Left cardiac atrium (tissue), 4 donors: ENCODE measurements at regions of chr12 and their contacts with region 1.

Region 1: GRCh38 chr12:26614020-26614616 is 218.9 kb downstream of the ITPR2 start:
- DNase-seq: peak; percentile 18
- ATAC-seq: peak; percentile 47 to 57

Region 2: DNA sequence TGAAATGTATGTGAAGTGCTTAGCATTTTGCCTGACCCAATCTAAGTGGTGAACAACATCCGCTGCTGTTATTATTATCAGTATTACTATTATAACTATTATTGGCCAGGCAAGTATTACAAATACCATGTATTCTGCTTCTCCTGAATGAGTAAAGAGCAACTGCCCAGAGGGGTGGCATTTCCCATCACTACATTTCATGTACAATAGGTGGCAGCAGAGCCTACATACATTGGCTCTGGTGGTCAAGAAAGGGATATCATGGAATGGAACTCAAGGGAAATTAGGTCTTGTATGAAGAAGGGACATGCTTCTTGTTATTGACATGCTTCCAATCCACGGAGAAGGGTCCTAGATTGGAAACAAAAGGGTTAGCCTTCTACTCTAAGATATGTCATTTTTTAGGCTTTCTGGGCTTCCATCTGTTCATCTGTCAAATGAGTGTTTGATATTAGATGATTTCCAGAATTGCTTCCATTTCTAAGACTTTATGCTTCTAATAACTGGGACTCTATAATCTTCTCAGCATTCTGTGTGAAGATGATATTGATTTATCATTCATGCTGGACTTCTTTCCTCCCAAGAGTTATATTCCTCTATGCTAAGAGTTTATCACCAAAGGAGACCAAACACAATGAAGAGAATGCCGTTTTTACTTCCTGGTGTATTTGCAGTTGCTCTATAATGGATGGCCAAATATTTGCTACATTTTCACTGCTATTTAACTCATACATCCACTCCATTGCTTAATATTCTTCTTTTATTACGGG is 179.6 kb before region 1 on chr12:
- intact Hi-C with region 1: loop called in 1 of 2 experiments (anchors 10 kb)
- DNase-seq: no peak
- ATAC-seq: peak in 1 of 2 donors; percentile 81

Region 3: DNA sequence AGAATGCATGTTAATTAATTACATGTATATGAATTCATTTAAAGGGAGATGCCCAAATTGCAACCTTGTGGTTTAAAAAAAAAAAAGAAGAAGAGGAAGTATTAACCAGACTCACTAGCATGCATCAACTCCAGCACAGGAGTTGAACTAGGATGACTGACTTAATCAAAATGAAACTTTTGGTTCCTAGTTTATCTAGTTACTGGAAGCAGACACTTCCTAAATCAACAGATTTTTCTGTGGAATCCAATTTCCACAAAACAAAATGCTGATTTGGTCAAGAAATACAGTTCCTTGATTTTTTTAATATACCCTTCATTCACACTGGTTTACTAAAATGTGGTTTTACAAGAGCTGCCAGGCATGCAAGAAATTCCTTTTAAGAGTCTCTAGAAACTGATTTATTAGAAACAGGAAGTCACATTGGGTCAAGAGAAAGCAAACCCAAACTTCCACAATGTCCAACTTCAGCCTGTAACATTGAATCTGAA is 177.2 kb after region 1 on chr12:
- intact Hi-C with region 1: no loop called
- DNase-seq: no peak
- ATAC-seq: peak; percentile 37 to 68